ENCODE measurements at regions of chr11 and their contacts with region 1.

Region 1: GRCh38 chr11:9280655-9281301 is 15.6 kb upstream of the DENND5A start:
- DNase-seq: peak in 9 of 10 donors; percentile 33 to 82 (median 71)
- ATAC-seq: peak; percentile 92 to 97
- H3K4me3 Mint-ChIP-seq: peak overlapping the region; percentile 33 to 73 (median 71)
- H3K27ac Mint-ChIP-seq: peak overlapping the region; percentile 61 to 91 (median 84)
- H3K4me1 Mint-ChIP-seq: peaks cover 5 to 21% (median 17%) of the 10 kb centered on the region in 4 donors
- H3K27me3 Mint-ChIP-seq: no peaks in the 10 kb centered on the region

Region 2: DNA sequence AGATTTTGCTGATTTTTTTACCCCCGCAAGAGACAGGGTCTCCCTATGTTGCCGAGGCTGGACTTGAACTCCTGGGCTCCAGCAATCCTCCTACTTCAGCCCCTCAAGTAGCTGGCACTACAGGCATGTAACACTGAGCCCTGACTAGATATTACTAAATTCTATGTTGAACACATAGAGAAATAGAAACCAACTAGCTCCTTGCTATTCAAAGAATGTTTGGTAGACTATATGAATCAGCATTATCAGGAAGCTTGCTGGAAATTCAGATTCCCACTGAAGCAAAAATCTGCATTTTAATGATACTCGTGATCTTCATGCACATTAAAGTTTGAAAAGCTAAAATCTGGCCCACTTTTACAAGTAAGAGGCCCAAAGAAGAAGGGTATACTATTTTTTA is 21.7 kb after region 1 on chr11:
- POLR2A ChIA-PET with region 1: interaction called, 15 read pairs
- DNase-seq: no peak
- ATAC-seq: no peak
- H3K4me3 Mint-ChIP-seq: no peak overlapping the region
- H3K27ac Mint-ChIP-seq: peak overlapping the region in 1 of 10 donors; percentile 57
- H3K4me1 Mint-ChIP-seq: peaks cover 11 to 31% (median 19%) of the 10 kb centered on the region in 4 donors
- H3K27me3 Mint-ChIP-seq: no peaks in the 10 kb centered on the region